Posterior cingulate gyrus (tissue), 11 donors: ENCODE measurements at regions of chr3 and their contacts with region 1.

Region 1: GRCh38 chr3:9986237-9986725 is 360 bp downstream of the EMC3 start:
- DNase-seq: peak in 1 of 10 donors; percentile 82

Region 2: GRCh38 chr3:9746330-9746729 is 240.0 kb before region 1 on chr3:
- intact Hi-C with region 1: no loop called
- DNase-seq: peak in 6 of 10 donors; percentile 51 to 93 (median 62)

Region 3: GRCh38 chr3:10026084-10026890 is 40.0 kb after region 1 on chr3 and contains the start of gene FANCD2:
- intact Hi-C with region 1: loop called (anchors 5 kb)
- DNase-seq: peak; percentile 83 to 99 (median 92)